ENCODE measurements at regions of chr4 and their contacts with region 1.

Region 1: DNA sequence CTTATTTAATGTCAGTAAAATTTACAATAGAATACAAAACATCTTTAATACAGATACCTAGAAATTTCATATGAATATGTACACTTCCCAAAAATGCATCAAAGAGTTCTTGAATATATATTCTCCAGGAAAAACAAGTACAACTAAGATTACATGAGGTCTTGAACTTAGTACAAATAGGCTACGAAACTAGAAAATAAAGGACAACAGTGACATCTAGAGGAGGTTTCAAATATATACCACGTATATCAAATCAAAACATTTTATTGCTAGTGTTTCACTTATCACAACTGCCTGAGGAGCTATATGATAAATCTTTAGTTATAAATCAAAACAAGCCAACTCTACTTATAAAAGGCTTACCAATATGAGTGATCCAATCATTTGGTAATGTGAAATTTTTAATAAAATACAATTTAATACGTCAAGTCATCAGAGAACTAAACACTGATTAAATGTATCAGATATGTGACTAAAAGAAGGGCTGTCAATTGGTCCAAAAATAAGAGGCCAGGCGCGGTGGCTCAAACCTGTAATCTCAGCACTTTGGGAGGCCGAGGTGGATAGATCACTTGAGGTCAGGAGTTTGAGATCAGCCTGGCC is 36.6 kb downstream of the ANAPC10 start:
- DNase-seq: no peak
- H3K4me3 Mint-ChIP-seq: no peak overlapping the region
- H3K27ac Mint-ChIP-seq: no peak overlapping the region
- H3K4me1 Mint-ChIP-seq: peaks cover 24% of the 10 kb centered on the region
- H3K27me3 Mint-ChIP-seq: no peaks in the 10 kb centered on the region

Region 2: DNA sequence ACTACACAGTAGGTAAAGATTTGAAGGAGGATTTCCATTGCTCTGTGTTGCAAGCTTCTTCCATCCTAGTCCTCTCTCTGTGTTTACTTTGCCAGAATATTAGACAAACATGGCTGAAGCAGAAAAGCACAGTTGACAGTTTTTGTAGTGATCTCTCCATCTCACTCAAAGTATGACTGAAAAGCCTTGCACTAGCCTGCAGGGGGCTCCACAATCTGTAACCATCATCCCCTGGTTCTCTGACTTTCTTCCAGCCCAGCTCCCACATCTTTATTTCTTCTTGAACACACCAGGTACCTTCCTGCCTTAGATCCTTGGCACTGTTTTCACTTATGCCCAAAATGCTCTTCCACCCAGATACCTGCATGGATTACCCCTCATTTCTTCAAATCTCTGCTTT is 449.6 kb before region 1 on chr4:
- intact Hi-C with region 1: loop called (anchors 5 kb)
- DNase-seq: no peak
- H3K4me3 Mint-ChIP-seq: no peak overlapping the region
- H3K27ac Mint-ChIP-seq: no peak overlapping the region
- H3K4me1 Mint-ChIP-seq: no peaks in the 10 kb centered on the region
- H3K27me3 Mint-ChIP-seq: no peaks in the 10 kb centered on the region

Region 3: DNA sequence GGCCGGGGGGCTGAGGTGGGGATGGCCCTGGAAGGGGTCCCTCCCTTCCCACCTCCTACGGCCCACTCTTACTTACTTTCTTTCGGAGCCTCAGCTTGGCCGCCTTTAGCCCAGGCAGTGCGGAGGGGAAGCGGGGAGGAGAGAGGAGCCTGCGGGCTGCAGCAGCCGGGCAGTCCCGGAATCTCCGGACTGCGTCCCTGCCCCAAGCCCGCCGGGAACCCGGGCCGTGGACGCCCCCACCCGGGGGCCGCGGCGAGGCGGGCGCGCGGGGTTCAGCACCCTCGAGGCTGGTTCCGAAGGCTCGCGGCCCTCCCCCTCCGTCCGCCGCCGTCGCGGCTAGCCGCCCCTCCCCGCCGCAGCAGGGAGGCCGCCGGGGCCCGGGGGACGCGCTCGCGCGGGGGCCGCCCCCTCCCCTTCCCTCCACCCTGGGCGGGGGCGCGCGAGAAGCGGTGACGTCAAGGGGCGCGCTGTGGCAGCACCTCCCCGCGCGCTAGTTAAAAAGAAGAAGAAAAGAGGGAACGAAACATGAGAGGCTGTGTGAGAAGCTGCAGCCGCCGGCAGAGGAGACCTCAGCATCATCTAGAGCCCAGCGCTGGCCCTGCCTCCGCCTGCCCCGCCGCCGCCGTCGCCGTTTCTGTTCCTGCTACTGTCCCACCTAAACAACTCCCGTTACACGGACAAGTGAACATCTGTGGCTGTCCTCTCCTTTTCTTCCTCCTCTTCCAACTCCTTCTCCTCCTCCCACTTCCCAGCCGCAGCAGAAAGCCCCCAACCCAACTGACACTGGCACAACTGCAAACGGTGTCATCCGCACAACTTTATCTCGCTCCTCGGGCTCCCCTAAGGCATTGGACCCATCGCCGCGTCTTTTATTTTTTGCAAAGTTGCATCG is 415.5 kb before region 1 on chr4 and contains the start of gene HHIP:
- intact Hi-C with region 1: loop called (anchors 10 kb)
- DNase-seq: peak; percentile 13
- H3K4me3 Mint-ChIP-seq: peak within 1 kb of the TSS; percentile 83
- H3K27ac Mint-ChIP-seq: no peak within 1 kb of the TSS
- H3K4me1 Mint-ChIP-seq: peaks cover 19% of the 10 kb centered on the region
- H3K27me3 Mint-ChIP-seq: peaks cover 59% of the 10 kb centered on the region
- total RNA-seq, gene HHIP: not detected in 2 replicates

Region 4: GRCh38 chr4:144787365-144788258 is 273.8 kb before region 1 on chr4:
- intact Hi-C with region 1: loop called (anchors 5 kb)
- DNase-seq: no peak
- H3K4me3 Mint-ChIP-seq: no peak overlapping the region
- H3K27ac Mint-ChIP-seq: no peak overlapping the region
- H3K4me1 Mint-ChIP-seq: peaks cover 7% of the 10 kb centered on the region
- H3K27me3 Mint-ChIP-seq: no peaks in the 10 kb centered on the region

Region 5: DNA sequence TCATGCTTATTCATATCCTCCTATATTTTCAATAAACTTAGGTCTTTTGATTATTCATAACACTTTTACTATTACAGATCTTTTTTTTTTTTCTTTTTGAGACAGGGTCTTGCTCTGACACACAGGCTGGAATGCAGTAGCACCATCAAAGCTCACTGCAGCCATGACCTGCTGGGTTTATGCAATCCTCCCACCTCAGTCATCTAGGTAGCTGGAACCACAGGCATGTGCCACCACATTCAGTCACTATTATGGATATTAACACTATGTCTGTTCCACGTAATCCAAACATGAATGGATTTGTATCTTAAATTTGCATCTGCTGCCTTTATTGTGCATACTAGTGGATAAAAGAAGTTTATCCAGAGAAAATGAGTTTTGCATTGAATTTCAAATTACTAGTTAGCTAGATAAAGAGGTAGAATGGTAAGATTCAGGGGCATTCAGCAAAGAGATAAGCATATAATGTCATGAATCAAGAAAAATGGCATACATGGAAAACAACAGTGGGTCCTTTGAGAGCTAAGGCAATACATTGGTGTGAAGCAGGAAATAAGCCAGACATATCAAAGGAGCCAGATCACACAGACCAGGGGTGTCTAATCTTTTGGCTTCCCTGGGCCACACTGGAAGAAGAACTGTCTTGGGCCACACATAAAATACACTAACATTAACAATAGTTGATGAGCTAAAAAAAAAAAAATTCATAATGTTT is 22.6 kb after region 1 on chr4:
- intact Hi-C with region 1: no loop called
- DNase-seq: no peak
- H3K4me3 Mint-ChIP-seq: no peak overlapping the region
- H3K27ac Mint-ChIP-seq: no peak overlapping the region
- H3K4me1 Mint-ChIP-seq: peaks cover 22% of the 10 kb centered on the region
- H3K27me3 Mint-ChIP-seq: no peaks in the 10 kb centered on the region